ENCODE measurements at regions of chr19 and their contacts with region 1.

Region 1: GRCh38 chr19:33430674-33431277 is 57.3 kb downstream of the CEBPG start:
- DNase-seq: peak; percentile 81
- ATAC-seq: peak; percentile 81
- H3K4me3 Mint-ChIP-seq: no peak overlapping the region
- H3K27ac Mint-ChIP-seq: peak overlapping the region; percentile 44
- H3K4me1 Mint-ChIP-seq: no peaks in the 10 kb centered on the region
- H3K27me3 Mint-ChIP-seq: no peaks in the 10 kb centered on the region
- CTCF ChIP-seq: peak; percentile 66

Region 2: DNA sequence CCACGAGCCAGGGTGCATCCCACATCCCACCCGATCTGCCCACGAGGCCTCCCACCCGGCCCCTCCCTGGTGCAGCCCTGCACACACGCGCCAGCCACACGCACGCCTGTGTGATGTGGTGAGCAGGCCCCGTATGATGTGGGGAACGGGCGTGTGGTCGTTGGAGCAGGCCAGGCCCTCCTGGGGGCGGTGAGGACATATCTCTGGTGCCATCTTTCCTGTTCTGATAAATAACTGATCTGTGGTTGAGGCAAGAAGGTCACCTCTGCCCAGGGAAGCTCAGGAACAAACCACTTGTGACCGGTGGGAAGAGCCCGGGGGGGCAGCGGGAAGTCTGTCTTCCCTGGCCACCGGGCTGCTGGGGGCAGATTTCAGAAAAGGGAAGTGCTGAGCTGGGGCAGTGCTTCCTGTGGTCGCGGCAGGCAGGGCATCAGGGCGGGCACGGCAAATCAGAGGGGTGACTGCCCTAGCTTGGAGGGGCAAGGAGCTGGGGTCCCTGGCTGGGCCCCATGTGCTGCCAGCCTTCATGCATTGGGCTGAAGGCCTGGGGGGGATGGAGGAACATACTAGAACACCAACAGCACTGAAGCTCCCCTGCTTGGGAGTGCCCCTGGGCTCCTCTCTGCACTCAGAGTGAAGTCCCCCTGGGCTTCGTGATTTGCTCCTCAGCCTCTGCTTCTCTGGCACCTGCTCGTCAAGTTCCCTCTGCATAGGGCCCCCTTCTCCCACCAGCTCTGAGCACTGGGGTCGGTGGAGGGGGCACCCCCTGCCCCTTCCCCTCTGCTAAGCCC is 170.0 kb before region 1 on chr19:
- CTCF ChIA-PET with region 1: no interaction called
- POLR2A ChIA-PET with region 1: no interaction called
- DNase-seq: no peak
- ATAC-seq: no peak
- H3K4me3 Mint-ChIP-seq: no peak overlapping the region
- H3K27ac Mint-ChIP-seq: no peak overlapping the region
- H3K4me1 Mint-ChIP-seq: peaks cover 3% of the 10 kb centered on the region
- H3K27me3 Mint-ChIP-seq: peaks cover 6% of the 10 kb centered on the region; the same call in 1 of the 2 replicates
- CTCF ChIP-seq: no peak

Region 3: GRCh38 chr19:33416307-33417215 is 14.2 kb before region 1 on chr19:
- CTCF ChIA-PET with region 1: interaction called, 60 read pairs
- POLR2A ChIA-PET with region 1: no interaction called
- DNase-seq: peak; percentile 87
- ATAC-seq: peak; percentile 81
- H3K4me3 Mint-ChIP-seq: peak overlapping the region; percentile 63
- H3K27ac Mint-ChIP-seq: no peak overlapping the region; the same call in 1 of the 2 replicates
- H3K4me1 Mint-ChIP-seq: peaks cover 11% of the 10 kb centered on the region
- H3K27me3 Mint-ChIP-seq: no peaks in the 10 kb centered on the region
- CTCF ChIP-seq: peak; percentile 74

Region 4: DNA sequence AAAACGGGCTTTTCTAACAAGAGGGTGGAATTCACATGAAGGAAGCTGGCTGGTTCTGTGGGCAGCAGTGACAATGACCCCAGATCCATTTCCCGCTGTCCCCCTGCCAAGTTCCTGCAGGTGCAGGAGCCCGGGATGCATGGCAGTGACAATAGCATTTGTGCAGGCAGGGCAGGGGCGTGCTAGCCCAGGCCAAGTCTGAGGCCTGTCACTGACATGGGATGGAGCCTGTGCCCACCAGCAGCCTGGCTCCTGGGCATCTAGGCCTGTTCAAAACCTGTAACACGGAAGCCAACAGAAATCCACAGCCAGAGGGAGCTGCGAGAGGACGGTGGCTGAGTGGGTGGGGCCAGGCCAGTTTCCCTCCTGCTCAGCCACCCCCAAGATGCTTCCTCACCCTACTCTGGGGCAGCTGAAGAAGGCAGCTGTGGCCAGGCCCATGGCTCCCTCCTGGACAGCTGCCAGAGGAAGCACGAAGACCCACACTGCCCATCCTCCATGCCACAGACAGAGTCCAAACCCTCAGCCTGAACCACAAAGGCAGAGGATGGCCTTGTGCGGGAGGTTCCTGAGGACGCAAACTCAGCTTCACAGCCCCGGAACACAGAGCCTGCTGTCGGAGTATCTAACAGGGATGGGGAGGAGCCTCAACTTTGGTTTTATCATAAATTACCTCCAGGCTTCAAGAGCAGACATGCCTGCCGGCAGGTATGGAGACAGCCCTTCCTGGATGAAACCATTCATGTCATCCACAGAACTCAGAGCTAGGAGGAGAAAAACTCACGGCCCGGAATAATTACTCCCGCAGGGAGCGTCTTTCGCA is 16.8 kb after region 1 on chr19:
- CTCF ChIA-PET with region 1: interaction called, 13 read pairs
- POLR2A ChIA-PET with region 1: no interaction called
- DNase-seq: peak; percentile 8
- ATAC-seq: no peak
- H3K4me3 Mint-ChIP-seq: no peak overlapping the region
- H3K27ac Mint-ChIP-seq: no peak overlapping the region
- H3K4me1 Mint-ChIP-seq: no peaks in the 10 kb centered on the region
- H3K27me3 Mint-ChIP-seq: no peaks in the 10 kb centered on the region
- CTCF ChIP-seq: no peak

Region 5: DNA sequence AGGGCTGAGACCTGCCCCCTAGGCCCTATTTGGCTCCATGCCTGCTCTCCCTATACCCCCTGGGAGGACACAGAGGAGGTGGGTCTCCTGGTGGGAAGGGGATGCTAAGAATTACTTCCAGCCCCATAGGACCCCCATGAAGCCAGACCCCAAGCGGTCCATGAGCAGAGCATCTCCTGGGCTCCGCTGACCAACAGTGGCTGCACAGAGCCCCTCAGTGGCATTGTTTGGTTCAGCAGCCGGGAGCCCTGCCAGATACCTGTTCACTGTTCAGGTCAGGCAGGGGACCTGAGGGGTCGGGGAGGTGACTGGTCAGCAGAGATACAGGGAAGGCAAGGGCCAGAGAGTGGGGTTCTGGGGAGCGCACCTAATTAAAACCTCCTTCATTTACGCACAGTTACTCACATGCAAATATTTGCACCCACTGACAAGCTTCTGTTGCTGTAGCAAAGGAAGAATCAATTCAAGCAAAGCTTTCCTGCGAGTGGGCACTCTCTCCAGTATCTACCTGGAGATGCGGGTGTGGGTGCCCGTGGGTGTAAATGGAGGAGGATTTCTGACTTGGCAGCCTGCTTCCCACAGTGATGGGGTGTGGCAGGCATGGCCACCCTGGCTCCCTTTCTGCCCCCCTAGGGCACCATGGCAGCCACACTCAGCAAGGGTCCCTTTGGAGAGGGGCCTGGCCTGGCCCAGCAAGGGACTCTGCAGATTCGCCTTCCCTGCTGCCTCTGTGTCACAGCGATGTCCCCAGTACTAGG is 274.5 kb after region 1 on chr19:
- CTCF ChIA-PET with region 1: interaction called, 10 read pairs
- POLR2A ChIA-PET with region 1: no interaction called
- DNase-seq: peak; percentile 53
- ATAC-seq: peak; percentile 63; the same call in 1 of the 2 replicates
- H3K4me3 Mint-ChIP-seq: no peak overlapping the region
- H3K27ac Mint-ChIP-seq: no peak overlapping the region
- H3K4me1 Mint-ChIP-seq: peaks cover 38% of the 10 kb centered on the region
- H3K27me3 Mint-ChIP-seq: no peaks in the 10 kb centered on the region
- CTCF ChIP-seq: no peak

Region 6: DNA sequence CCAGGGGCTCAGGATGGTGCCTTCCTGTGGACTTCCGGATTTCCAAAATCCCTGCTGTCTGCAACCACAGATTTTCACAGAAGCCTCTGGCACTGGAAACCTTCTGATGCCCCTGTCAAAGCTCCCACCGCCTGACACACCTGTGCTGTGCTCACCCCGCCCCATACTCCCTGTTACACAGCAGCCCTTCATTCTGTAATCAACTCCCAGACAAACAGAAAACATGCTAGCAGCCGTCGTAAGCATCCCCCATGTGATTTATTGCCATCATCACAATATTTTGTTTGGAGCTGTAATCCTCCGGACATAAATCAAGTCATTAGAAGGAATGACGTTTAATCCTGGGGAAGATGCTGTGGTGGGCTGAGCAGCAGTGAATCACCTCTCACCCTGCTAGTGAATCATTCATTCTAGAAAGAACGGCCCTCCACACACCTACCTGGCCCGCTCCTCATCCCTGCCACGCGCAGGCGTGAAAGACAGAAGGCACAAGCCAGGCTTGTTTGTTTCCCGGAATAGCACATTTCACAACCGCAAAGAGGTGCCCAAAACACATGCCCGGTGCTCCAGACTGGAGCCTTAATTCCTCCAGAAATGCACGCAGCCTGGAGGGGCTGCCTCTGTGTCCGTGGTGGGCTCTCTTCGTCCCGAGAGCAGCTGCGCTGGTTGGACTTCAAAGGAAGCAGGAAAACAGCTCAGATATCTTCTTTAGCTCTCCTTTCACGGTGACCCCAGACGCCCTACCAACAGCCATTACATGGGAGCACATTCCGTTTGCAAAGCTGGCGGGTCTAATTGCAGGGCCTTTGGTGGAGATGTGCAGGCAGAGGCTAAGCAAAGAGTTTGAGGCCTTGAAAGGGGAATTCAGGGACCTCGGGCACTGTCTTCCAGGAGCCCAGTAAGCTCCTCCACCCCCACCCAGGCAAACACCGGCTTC is 324.6 kb after region 1 on chr19:
- CTCF ChIA-PET with region 1: interaction called, 10 read pairs
- POLR2A ChIA-PET with region 1: no interaction called
- DNase-seq: no peak
- ATAC-seq: no peak
- H3K4me3 Mint-ChIP-seq: no peak overlapping the region
- H3K27ac Mint-ChIP-seq: no peak overlapping the region
- H3K4me1 Mint-ChIP-seq: no peaks in the 10 kb centered on the region
- H3K27me3 Mint-ChIP-seq: no peaks in the 10 kb centered on the region
- CTCF ChIP-seq: no peak

Measured in WTC11 (cell line).